MCF 10A (cell line): ENCODE measurements at regions of chr6 and their contacts with region 1.

Region 1: DNA sequence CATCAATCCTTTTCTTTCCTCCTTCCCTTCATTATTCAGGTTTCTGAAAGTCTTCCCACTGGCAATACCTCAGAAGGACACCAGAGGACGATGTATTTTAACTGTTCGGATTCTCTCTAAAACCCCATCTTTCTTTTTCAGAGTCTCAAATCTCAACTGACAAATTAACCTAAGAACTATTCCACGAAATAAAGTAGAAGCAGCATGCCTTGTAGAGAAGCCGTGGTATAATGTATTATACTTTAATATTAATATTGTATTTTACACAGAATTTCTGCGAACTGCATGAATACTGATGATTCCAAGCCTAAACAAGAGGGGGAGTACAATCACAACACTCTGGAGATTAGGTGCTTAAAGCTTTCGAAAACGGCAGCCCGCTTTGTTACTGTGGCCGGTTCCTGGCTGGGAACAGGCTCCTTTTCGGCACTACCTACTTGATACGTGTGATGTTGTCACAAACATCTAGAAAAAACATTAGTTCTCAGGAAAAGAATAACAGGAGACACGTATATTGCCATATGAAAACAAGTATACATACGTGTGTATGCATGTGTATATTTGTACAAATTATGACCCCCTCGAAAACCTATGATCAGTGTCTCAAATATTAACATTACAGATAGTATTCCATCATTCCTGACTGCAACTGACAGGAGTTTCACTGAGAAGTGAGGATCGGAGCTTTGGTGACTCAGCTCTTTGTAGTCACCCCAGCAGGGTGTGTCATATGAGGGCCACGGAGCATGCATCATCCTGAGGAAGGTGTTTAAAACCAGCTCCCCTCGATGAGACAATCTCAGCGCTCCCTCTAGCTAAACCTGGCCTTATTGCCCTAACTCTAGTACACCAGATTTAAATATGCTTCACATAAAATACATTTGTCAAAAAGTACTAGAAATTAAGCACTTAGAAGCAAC is 319.7 kb upstream of the TCF21 start:
- DNase-seq: peak; percentile 97
- H3K4me3 Mint-ChIP-seq: peak overlapping the region; percentile 71
- H3K27ac Mint-ChIP-seq: peak overlapping the region; percentile 93
- H3K4me1 Mint-ChIP-seq: peaks cover 16% of the 10 kb centered on the region
- H3K27me3 Mint-ChIP-seq: no peaks in the 10 kb centered on the region
- CTCF ChIP-seq: peak; percentile 85

Region 2: DNA sequence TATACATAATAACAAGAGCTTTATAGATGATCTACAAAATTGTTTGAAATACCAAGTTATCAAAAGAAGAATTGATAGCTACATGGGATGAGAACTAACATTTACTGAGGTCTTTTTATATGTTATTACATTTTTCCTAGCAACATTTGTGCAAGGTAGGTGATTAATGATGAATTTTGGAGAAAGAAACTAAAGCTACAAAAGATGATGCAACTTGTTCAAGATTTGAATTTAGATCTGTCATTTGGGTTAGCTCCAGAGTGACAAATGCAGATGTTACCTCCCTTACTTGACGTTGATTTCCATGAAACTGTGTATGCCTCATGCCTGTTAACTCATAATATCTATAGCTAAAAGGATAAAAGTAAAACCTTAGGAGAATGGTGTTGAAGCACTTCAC is 412.5 kb before region 1 on chr6:
- CTCF ChIA-PET with region 1: no interaction called
- POLR2A ChIA-PET with region 1: no interaction called
- intact Hi-C with region 1: no loop called
- DNase-seq: no peak
- H3K4me3 Mint-ChIP-seq: no peak overlapping the region
- H3K27ac Mint-ChIP-seq: no peak overlapping the region
- H3K4me1 Mint-ChIP-seq: no peaks in the 10 kb centered on the region
- H3K27me3 Mint-ChIP-seq: peaks cover 59% of the 10 kb centered on the region
- CTCF ChIP-seq: no peak

Region 3: DNA sequence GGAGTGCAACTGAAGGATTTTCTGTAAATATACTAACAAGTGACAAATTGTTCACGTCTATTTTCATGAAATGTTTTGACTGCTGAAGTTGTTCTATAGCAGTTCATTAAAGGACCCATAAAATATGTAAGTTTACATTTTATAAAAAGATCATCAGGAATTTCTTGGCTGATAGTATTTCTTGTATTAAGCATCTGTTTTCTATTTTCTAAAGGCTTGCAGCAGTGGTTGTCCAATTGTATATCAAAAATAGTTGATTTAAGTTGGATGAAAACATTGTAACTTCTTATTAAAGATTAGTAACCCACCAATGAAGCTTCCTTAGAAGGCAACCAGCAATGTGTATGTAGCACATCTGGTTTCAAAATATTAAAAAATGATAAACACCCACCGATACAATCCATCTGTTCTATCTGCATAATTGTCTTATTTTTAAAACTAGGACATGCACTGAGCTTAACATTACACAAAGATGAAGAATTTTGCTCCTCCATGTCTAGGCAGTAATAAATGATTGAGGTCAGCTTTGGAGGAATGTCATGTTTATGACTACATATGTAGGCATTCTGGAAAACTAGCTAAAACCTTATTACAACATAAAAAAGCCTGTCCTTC is 18.4 kb after region 1 on chr6:
- CTCF ChIA-PET with region 1: interaction called, 24 read pairs
- POLR2A ChIA-PET with region 1: interaction called, 19 read pairs
- intact Hi-C with region 1: loop called (anchors 1 kb)
- DNase-seq: no peak
- H3K4me3 Mint-ChIP-seq: no peak overlapping the region
- H3K27ac Mint-ChIP-seq: no peak overlapping the region
- H3K4me1 Mint-ChIP-seq: peaks cover 26% of the 10 kb centered on the region
- H3K27me3 Mint-ChIP-seq: no peaks in the 10 kb centered on the region
- CTCF ChIP-seq: no peak

Region 4: GRCh38 chr6:133741375-133741861 is 172.2 kb after region 1 on chr6:
- CTCF ChIA-PET with region 1: interaction called, 5 read pairs
- POLR2A ChIA-PET with region 1: interaction called, 6 read pairs
- intact Hi-C with region 1: loop called (anchors 1 kb)
- DNase-seq: peak; percentile 93
- H3K4me3 Mint-ChIP-seq: no peak overlapping the region
- H3K27ac Mint-ChIP-seq: peak overlapping the region; percentile 57
- H3K4me1 Mint-ChIP-seq: peaks cover 13% of the 10 kb centered on the region
- H3K27me3 Mint-ChIP-seq: no peaks in the 10 kb centered on the region
- CTCF ChIP-seq: no peak

Region 5: DNA sequence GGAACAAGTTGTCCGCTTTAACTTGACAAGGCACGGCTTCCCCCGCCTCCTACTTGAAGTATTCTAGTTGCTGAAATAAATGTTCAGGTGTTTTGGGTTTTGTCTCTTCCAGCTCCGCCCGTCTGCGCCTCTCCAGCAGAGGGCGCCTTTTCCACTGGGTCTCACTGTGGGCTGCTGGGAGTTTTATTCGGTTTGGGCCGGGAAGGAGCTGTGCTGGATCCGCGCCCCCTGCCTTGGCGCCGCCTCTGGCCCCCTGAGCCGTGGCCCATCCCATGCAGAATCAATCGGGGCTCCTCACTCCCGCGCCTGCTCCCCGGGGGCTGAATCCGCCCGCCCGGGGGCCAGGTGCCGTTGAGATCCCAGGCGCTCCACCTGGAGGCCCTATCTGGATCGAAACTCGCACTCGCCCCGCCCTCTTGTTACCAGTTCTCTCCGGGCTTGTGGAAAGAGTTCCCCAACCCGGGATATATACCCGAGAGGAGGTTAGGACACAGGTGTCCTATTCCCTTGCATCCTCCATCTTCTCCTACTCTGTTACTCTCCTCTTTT is 268.6 kb after region 1 on chr6:
- CTCF ChIA-PET with region 1: interaction called, 6 read pairs
- POLR2A ChIA-PET with region 1: no interaction called
- intact Hi-C with region 1: loop called (anchors 1 kb)
- DNase-seq: peak; percentile 50
- H3K4me3 Mint-ChIP-seq: peak overlapping the region; percentile 55
- H3K27ac Mint-ChIP-seq: no peak overlapping the region
- H3K4me1 Mint-ChIP-seq: peaks cover 6% of the 10 kb centered on the region
- H3K27me3 Mint-ChIP-seq: no peaks in the 10 kb centered on the region
- CTCF ChIP-seq: peak; percentile 47

Region 6: DNA sequence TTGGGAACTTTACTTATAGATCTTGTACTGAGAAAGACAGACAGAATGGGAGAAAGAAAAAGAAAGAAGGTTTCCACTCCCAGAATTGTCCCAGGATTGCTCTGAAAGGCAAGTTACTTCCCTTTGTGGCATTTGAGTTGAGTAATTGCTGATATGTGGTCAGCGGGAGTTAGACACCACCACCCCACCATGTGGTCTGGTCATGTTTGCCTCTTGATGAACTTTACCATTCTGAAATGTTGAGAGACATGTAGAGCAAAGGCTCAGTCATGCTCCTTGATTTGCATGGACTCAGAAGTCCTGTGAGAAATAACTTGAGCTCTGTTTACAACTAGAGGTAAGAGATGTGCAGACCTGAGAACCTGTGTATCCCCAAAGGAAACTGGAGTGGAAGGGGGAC is 336.8 kb after region 1 on chr6:
- CTCF ChIA-PET with region 1: interaction called, 25 read pairs
- POLR2A ChIA-PET with region 1: no interaction called
- intact Hi-C with region 1: no loop called
- DNase-seq: no peak
- H3K4me3 Mint-ChIP-seq: no peak overlapping the region
- H3K27ac Mint-ChIP-seq: no peak overlapping the region
- H3K4me1 Mint-ChIP-seq: no peaks in the 10 kb centered on the region
- H3K27me3 Mint-ChIP-seq: no peaks in the 10 kb centered on the region
- CTCF ChIP-seq: no peak